Activated CD4-positive, alpha-beta memory T cell treated with anti-CD3 and anti-CD28 coated beads for 36 hours (primary cell): ENCODE measurements at regions of chr3 and their contacts with region 1.

Region 1: DNA sequence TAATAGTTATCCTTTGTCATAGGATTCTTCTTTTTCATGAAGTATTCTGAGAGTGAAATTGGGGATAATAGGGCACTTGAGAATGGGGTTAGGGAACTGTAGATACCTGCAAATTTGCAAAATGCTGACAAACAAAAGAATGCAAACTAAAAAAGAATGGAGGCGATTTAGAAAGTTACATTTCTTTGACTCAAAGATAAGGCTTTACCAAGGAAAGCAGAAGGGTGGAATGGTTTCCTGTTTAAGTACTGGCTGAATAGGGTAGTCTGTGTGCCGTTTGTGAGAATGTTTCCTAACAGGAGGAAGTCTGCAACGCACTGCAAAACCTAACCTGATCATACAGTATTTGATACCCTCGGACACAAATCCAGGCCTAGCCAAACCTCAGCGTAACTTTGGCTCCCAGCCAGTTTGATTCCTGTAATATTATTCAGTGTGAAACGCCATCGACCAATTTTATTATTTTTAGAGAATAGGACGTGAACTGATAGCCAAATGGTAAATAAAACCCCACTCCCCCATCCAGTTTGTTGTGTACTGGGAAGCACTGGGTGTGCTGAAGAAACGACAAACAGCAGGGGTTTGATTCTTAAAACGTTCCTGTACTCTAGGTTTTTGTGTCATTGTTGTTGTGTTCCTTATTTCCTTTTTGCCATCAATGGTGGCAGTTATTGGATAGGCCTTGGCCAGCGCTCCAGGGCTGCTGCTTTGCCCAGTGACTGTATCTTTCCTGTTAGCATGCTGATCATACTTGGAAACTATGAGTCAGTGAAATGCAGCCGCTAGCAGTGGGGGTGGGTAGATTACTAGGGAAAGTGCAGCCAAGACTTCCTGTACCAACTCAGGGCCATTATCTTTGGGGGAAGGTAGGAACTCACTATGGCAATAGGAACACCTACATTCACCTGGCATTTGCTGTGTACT is 148.0 kb upstream of the TBL1XR1 start:
- DNase-seq: peak; percentile 86
- H3K4me3 Mint-ChIP-seq: peak overlapping the region; percentile 20
- H3K27ac Mint-ChIP-seq: peak overlapping the region; percentile 90
- H3K4me1 Mint-ChIP-seq: peaks cover 40% of the 10 kb centered on the region
- H3K27me3 Mint-ChIP-seq: no peaks in the 10 kb centered on the region

Region 2: GRCh38 chr3:176430244-176431037 is 914.9 kb before region 1 on chr3:
- CTCF ChIA-PET with region 1: no interaction called
- POLR2A ChIA-PET with region 1: no interaction called
- intact Hi-C with region 1: no loop called
- DNase-seq: no peak
- H3K4me3 Mint-ChIP-seq: no peak overlapping the region
- H3K27ac Mint-ChIP-seq: no peak overlapping the region
- H3K4me1 Mint-ChIP-seq: no peaks in the 10 kb centered on the region
- H3K27me3 Mint-ChIP-seq: no peaks in the 10 kb centered on the region

Region 3: DNA sequence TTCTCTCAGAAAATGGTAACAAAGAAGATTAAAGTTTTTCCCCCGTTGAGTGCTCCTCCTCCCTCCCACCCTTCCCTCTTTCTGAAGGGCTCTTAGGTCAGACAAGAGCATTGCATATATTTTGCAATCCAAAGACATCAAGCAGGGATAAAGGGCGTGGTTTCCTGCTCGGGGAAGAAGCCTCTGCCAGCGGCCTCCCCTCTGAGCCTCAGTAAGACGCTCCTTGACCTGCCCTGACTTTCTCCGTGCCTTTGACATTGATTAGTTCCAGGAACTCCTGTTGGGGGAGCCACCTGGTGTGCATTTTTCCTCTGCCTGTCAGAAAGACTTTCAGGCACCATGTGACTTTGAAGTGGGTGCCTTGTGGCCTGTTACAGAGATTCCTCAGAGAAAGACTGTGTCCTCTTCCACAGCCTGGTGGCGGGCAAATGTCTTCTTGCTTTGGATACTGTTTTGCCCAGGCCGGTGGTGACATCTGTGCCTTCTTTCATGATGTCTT is 60.9 kb before region 1 on chr3:
- CTCF ChIA-PET with region 1: no interaction called
- POLR2A ChIA-PET with region 1: no interaction called
- intact Hi-C with region 1: loop called (anchors 2 kb)
- DNase-seq: peak; percentile 59
- H3K4me3 Mint-ChIP-seq: no peak overlapping the region
- H3K27ac Mint-ChIP-seq: no peak overlapping the region
- H3K4me1 Mint-ChIP-seq: peaks cover 23% of the 10 kb centered on the region
- H3K27me3 Mint-ChIP-seq: no peaks in the 10 kb centered on the region